Calu3 (cell line): ENCODE measurements at regions of chr11 and their contacts with region 1.

Region 1: GRCh38 chr11:77019976-77020595 is 14.1 kb upstream of the B3GNT6 start:
- DNase-seq: peak; percentile 46
- H3K4me3 Mint-ChIP-seq: peak overlapping the region; percentile 9
- H3K27ac Mint-ChIP-seq: peak overlapping the region; percentile 83
- H3K4me1 Mint-ChIP-seq: peaks cover 59% of the 10 kb centered on the region
- H3K27me3 Mint-ChIP-seq: no peaks in the 10 kb centered on the region
- CTCF ChIP-seq: no peak

Region 2: DNA sequence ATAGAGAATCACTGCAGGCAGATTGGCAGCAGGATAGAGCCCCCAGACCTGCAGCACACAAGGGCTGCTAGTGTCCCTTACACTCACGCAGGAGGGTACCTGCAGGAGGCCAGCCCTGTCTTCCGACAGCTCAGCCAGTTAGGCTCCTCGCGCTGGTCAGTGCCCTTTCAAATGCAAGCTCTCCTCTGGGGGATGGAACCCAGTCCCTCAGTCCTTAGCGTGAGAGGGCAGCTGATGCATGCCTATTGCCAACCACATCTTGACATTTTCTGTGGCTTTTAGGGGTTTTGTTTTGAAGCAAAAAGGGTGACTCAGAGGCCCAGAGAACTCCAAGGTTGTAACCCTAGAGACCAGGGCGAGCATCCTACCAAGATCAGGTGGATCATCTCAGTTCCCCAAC is 853.8 kb before region 1 on chr11:
- CTCF ChIA-PET with region 1: no interaction called
- intact Hi-C with region 1: no loop called
- DNase-seq: no peak
- H3K4me3 Mint-ChIP-seq: no peak overlapping the region
- H3K27ac Mint-ChIP-seq: no peak overlapping the region
- H3K4me1 Mint-ChIP-seq: no peaks in the 10 kb centered on the region
- H3K27me3 Mint-ChIP-seq: peaks cover 65% of the 10 kb centered on the region
- CTCF ChIP-seq: no peak

Region 3: DNA sequence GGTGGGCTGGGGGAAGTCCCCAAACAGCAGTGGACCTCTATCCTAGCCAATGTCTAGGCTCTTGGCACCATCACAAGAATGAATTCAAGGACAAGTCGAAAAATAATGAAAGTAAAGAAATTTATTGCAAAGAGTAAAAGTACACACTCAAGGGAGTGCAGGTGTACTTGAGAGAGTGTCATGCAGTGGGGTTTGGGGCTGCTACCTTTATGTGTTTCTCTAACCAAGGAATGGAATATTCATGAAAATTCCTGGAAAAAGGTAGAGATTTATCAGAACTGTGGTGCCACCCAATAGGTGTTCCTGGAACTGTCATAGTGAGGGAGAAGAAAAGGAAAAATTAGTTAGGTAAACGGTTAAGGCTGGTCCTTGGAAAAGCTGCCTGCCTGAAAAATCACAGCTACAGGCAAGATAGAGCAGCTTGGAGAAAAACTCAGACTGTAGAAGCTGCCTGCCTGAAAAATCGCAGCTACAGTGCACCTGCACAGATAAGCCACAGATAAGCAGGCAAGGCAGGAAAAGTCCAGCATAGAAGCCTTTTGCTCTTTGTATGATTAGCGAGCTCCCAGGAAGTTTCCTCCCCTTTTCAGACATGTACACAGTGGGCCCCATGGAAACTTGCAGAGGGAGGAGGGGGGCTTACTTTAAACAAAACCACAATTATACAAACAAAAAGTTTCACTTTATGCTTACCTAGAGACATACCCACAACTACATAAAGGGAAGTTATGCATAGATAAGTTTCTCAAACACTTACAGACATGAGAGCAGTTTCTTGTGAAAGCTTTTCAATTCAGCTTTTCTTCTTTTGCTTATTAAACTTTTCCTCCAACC is 57.3 kb before region 1 on chr11:
- CTCF ChIA-PET with region 1: interaction called, 5 read pairs
- intact Hi-C with region 1: loop called (anchors 5 kb)
- DNase-seq: peak; percentile 58
- H3K4me3 Mint-ChIP-seq: peak overlapping the region; percentile 49
- H3K27ac Mint-ChIP-seq: peak overlapping the region; percentile 89
- H3K4me1 Mint-ChIP-seq: peaks cover 31% of the 10 kb centered on the region
- H3K27me3 Mint-ChIP-seq: no peaks in the 10 kb centered on the region
- CTCF ChIP-seq: no peak

Region 4: GRCh38 chr11:76990628-76991027 is 29.5 kb before region 1 on chr11:
- CTCF ChIA-PET with region 1: no interaction called
- intact Hi-C with region 1: no loop called
- DNase-seq: no peak
- H3K4me3 Mint-ChIP-seq: no peak overlapping the region
- H3K27ac Mint-ChIP-seq: no peak overlapping the region
- H3K4me1 Mint-ChIP-seq: peaks cover 18% of the 10 kb centered on the region
- H3K27me3 Mint-ChIP-seq: no peaks in the 10 kb centered on the region
- CTCF ChIP-seq: no peak